Stomach (tissue), 19 donors: ENCODE measurements at regions of chr5 and their contacts with region 1.

Region 1: DNA sequence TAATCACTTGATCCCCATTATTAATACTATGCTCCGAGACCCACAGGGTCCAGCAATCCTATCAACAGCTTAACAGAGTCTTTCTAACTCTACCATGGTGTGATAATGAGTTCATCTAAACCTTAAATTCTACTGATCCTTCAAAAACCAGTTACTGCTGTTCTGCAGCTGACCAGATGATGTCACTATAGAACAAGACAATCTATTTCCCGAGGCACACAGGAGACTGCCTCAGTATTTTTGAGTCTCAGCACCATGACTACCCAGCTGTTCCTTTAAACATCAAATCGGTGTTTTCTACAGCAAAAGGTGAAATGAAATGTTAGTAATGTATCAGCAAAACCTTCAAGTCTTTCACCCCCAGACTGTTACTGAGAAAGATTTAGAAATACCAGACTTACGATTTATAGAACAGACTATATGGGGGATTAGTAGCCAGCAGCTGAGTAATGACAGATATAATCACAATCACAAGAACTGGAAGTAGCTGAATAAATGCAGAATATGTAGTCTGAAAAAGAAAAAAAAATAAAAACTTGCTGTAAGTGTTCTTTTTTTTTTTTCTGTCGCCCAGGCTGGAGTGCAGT is 16.9 kb downstream of the DNAJC18 start:
- DNase-seq: peak in 1 of 2 donors; percentile 89
- H3K4me3 ChIP-seq: no peak overlapping the region
- H3K27ac ChIP-seq: no peak overlapping the region
- H3K4me1 ChIP-seq: peaks cover 0 to 14% (median 4%) of the 10 kb centered on the region in 4 donors
- H3K27me3 ChIP-seq: no peaks in the 10 kb centered on the region
- CTCF ChIP-seq: peak in 5 of 7 experiments; percentile 64 to 79 (median 71)
- EP300 ChIP-seq: no peak
- POLR2A ChIP-seq: no peak

Region 2: DNA sequence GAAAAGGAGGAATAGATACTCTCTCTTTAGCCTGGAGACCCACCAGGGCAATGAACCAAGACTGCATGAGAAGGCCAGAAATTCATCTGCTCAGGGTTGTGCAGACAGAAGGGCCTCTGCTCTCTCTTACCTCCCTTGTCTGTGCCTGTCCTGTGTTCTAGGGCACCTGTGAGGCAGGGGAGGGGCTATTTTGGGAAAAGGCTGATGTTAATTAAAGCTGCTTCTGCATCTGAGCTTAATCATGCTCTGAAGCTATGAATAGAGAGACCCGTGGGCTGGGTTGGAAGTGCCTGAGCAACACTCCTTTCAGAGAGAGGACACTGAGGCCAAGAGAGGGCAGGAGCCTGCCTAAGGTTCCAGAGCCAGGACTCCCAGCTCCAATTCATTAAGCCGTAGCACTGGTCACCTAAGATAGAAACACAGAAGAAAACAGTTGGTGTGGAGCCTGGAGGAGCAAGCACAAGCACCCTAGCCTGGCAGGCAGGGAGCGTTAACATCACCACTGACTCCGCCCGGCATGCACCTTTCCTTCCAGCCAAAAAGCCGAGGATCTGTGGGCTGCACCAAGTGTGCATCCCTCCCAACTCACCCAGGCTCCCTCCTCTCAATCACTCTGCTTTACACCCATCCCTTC is 91.6 kb after region 1 on chr5:
- intact Hi-C with region 1: loop called (anchors 5 kb)
- DNase-seq: no peak
- H3K4me3 ChIP-seq: no peak overlapping the region
- H3K27ac ChIP-seq: no peak overlapping the region
- H3K4me1 ChIP-seq: peaks cover 0 to 12% (median 12%) of the 10 kb centered on the region in 4 donors
- H3K27me3 ChIP-seq: no peaks in the 10 kb centered on the region
- CTCF ChIP-seq: no peak
- EP300 ChIP-seq: no peak
- POLR2A ChIP-seq: no peak

Region 3: GRCh38 chr5:139639578-139640301 is 217.3 kb after region 1 on chr5:
- intact Hi-C with region 1: no loop called
- DNase-seq: peak; percentile 29 to 49
- H3K4me3 ChIP-seq: no peak overlapping the region
- H3K27ac ChIP-seq: peak overlapping the region in 2 of 5 donors; percentile 28 to 94
- H3K4me1 ChIP-seq: peaks cover 58 to 79% (median 70%) of the 10 kb centered on the region in 4 donors
- H3K27me3 ChIP-seq: peaks cover 0 to 3% (median 0%) of the 10 kb centered on the region in 3 donors
- CTCF ChIP-seq: no peak
- EP300 ChIP-seq: no peak
- POLR2A ChIP-seq: no peak